GM12878 (cell line): ENCODE measurements at regions of chr19 and their contacts with region 1.

Region 1: DNA sequence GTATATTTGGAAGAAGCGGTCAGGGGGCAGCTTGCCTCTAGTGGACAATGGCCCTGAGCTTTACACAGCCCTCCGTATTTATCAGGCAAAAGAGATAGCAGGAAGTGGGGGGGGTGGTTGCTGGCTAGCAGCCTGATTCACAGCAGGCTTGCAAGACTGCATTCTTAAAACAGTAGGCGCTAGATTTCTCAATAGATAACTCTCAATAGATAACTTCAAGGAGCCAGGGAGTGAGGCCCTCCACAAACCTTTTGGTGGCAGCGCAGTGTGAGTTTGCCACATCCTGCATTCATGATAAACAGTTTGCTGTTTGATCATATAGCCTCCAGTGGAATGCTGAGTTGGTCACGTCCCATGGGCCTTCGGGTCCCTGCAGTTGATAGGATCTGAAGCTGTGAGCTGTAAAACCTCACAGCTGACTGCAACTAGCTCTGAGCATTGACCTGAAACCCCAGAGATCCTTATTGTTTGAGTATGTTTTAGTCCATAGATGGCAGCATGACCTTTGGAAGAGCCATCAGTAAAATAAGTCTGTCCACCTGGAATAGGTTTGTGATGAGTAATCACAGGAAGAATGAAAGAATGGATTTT is 12.2 kb downstream of the FPR3 start:
- DNase-seq: no peak
- ATAC-seq: no peak
- H3K4me3 ChIP-seq: no peak overlapping the region
- H3K27ac ChIP-seq: no peak overlapping the region
- H3K4me1 ChIP-seq: no peaks in the 10 kb centered on the region
- H3K27me3 ChIP-seq: no peaks in the 10 kb centered on the region
- CTCF ChIP-seq: no peak
- EP300 ChIP-seq: no peak
- POLR2A ChIP-seq: no peak
- RAD21 ChIP-seq: no peak

Region 2: GRCh38 chr19:51777570-51778462 is 29.4 kb before region 1 on chr19:
- CTCF ChIA-PET with region 1: interaction called, 10 read pairs
- POLR2A ChIA-PET with region 1: no interaction called
- RAD21 ChIA-PET with region 1: no interaction called
- SMC1A ChIA-PET with region 1: no interaction called
- in situ Hi-C with region 1: no loop called
- intact Hi-C with region 1: no loop called
- DNase-seq: no peak
- ATAC-seq: peak; percentile 63
- H3K4me3 ChIP-seq: no peak overlapping the region
- H3K27ac ChIP-seq: no peak overlapping the region
- H3K4me1 ChIP-seq: no peaks in the 10 kb centered on the region; the same call in 1 of the 2 replicates
- H3K27me3 ChIP-seq: no peaks in the 10 kb centered on the region
- CTCF ChIP-seq: peak; percentile 50 to 63 (median 55); a peak in 4 of 6 replicates
- EP300 ChIP-seq: no peak
- POLR2A ChIP-seq: no peak
- RAD21 ChIP-seq: peak; percentile 66

Region 3: DNA sequence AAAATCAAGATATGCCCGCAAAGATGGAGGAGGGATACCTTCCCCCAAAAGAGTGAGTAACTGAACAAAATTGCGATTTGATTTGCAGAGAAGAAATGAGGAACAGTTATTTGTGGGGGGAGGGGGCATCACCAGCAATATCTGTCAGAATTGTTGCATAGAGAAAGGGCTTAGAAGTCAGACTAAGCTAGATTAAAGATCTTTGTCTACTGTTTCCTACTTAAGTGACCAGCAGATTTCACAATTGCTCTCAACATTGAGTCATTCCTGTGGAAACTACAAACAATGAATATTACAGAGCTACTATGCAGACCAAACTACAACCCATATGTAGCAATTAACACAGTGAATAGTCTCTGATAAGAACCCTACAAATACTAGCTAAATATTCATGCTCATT is 15.1 kb after region 1 on chr19:
- CTCF ChIA-PET with region 1: no interaction called
- POLR2A ChIA-PET with region 1: no interaction called
- RAD21 ChIA-PET with region 1: no interaction called
- SMC1A ChIA-PET with region 1: no interaction called
- in situ Hi-C with region 1: no loop called
- intact Hi-C with region 1: no loop called
- DNase-seq: no peak
- ATAC-seq: no peak
- H3K4me3 ChIP-seq: no peak overlapping the region
- H3K27ac ChIP-seq: no peak overlapping the region
- H3K4me1 ChIP-seq: no peaks in the 10 kb centered on the region
- H3K27me3 ChIP-seq: no peaks in the 10 kb centered on the region
- CTCF ChIP-seq: no peak
- EP300 ChIP-seq: no peak
- POLR2A ChIP-seq: no peak
- RAD21 ChIP-seq: no peak